Gastrocnemius medialis (tissue), 4 donors: ENCODE measurements at regions of chr5 and their contacts with region 1.

Region 1: GRCh38 chr5:147935032-147935431 is 28.7 kb upstream of the C5orf46 start:
- DNase-seq: no peak
- ATAC-seq: peak; percentile 76 to 93
- H3K4me3 ChIP-seq: no peak overlapping the region
- H3K27ac ChIP-seq: no peak overlapping the region
- H3K4me1 ChIP-seq: no peaks in the 10 kb centered on the region
- H3K27me3 ChIP-seq: no peaks in the 10 kb centered on the region
- CTCF ChIP-seq: peak in 2 of 5 experiments; percentile 14 to 54
- POLR2A ChIP-seq: no peak

Region 2: GRCh38 chr5:147037515-147038205 is 897.4 kb before region 1 on chr5:
- in situ Hi-C with region 1: no loop called
- intact Hi-C with region 1: no loop called
- DNase-seq: no peak
- ATAC-seq: no peak
- H3K4me3 ChIP-seq: no peak overlapping the region
- H3K27ac ChIP-seq: no peak overlapping the region
- H3K4me1 ChIP-seq: no peaks in the 10 kb centered on the region
- H3K27me3 ChIP-seq: no peaks in the 10 kb centered on the region
- CTCF ChIP-seq: no peak
- POLR2A ChIP-seq: no peak

Region 3: GRCh38 chr5:147857302-147858129 is 77.5 kb before region 1 on chr5:
- in situ Hi-C with region 1: loop called in 1 of 4 experiments (anchors 10 kb)
- intact Hi-C with region 1: no loop called
- DNase-seq: no peak
- ATAC-seq: no peak
- H3K4me3 ChIP-seq: no peak overlapping the region
- H3K27ac ChIP-seq: no peak overlapping the region
- H3K4me1 ChIP-seq: no peaks in the 10 kb centered on the region
- H3K27me3 ChIP-seq: no peaks in the 10 kb centered on the region
- CTCF ChIP-seq: peak; percentile 31 to 70 (median 51)
- POLR2A ChIP-seq: no peak

Region 4: GRCh38 chr5:147887024-147887627 is 47.9 kb before region 1 on chr5:
- in situ Hi-C with region 1: loop called in 1 of 4 experiments (anchors 5 kb)
- intact Hi-C with region 1: no loop called
- DNase-seq: no peak
- ATAC-seq: no peak
- H3K4me3 ChIP-seq: no peak overlapping the region
- H3K27ac ChIP-seq: no peak overlapping the region
- H3K4me1 ChIP-seq: no peaks in the 10 kb centered on the region
- H3K27me3 ChIP-seq: no peaks in the 10 kb centered on the region
- CTCF ChIP-seq: peak in 2 of 5 experiments; percentile 25 to 65
- POLR2A ChIP-seq: no peak

Region 5: DNA sequence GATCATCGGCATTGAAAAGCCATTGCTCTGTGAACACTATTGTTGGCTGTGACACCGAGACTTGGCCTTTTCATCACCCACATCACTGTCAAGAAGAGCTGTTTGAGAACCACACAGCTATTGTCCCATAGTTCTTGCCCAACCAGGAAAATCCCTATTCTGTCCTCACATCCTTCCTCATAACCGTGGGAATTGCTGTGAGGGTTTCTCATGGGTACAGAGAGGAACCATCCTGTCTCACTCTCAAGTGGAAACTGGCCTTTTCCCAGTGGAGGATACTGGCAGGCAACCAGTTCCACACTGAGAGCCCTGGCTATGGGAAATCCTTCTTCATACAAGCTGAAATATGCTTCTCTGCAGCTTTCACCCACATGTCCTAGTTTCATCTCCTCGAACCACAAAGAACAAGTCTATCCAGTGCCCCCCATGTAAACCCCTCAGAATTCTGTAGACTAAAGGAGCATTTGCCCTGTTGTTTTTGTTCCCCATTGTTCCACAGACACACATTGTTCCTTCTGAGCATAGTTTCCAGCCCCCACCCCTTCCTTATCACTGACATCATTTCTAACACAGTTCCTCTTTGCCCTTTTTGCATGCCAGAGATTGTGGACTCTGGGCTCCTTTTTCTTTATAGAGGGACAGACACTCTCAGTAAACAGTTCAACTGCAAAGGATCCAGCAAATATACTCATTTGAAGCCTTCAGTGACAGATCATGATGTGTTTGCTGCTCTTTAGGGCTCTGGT is 29.1 kb after region 1 on chr5:
- in situ Hi-C with region 1: no loop called
- intact Hi-C with region 1: no loop called
- DNase-seq: peak in 1 of 2 donors; percentile 11
- ATAC-seq: peak in 1 of 2 donors; percentile 56
- H3K4me3 ChIP-seq: no peak overlapping the region
- H3K27ac ChIP-seq: peak overlapping the region; percentile 34 to 72 (median 56)
- H3K4me1 ChIP-seq: no peaks in the 10 kb centered on the region
- H3K27me3 ChIP-seq: no peaks in the 10 kb centered on the region
- CTCF ChIP-seq: no peak
- POLR2A ChIP-seq: no peak